ENCODE measurements at regions of chr16 and their contacts with region 1.

Region 1: GRCh38 chr16:4957720-4958509 is at the start of gene SEC14L5:
- DNase-seq: peak; percentile 97
- H3K4me3 Mint-ChIP-seq: peak within 1 kb of the TSS; percentile 88
- H3K27ac Mint-ChIP-seq: peak within 1 kb of the TSS; percentile 62
- H3K4me1 Mint-ChIP-seq: peaks cover 20% of the 10 kb centered on the region
- H3K27me3 Mint-ChIP-seq: peaks cover 31% of the 10 kb centered on the region
- total RNA-seq, gene SEC14L5: not detected in 2 replicates

Region 2: DNA sequence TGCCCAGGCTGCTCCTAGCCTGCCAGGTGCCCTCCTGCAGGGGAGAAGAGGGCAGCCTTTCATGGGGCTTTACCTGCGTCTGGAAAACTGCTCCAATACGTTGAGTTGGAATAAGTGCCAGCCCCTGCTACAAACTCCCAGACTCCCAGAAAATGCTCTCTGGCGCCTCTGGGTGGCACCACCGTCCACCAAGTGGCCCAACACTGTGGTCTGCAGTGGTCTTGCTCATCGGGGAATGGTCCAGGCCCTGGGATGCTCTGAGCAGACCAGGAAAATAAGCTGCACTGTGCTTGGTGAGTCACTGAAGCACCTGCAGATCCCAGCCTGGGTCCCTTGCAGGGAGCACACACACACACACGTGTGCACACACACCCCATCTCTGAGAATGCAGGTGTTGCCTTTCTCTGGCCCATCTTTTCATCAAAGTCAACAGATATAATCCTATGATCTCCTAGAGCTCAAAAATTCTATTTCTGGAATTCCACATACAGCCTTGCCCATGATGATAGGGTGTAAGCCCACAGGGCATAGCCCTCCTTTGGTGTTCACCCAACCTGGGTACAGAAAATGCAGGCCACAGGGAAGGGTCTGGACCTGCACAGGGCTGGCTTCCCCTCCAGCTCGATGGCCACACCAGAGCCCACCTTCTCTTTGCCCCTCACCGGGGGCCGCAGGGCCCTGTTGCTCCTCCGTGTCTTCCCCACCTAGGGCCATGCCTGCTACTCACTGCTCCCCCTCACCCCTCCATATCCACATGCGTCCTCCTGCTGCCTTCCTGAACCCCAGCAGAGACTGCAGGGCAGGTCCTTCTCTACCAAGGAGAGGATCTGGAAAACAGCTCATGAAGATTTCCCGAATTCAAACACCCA is 439.9 kb before region 1 on chr16:
- intact Hi-C with region 1: no loop called
- DNase-seq: no peak
- H3K4me3 Mint-ChIP-seq: no peak overlapping the region
- H3K27ac Mint-ChIP-seq: no peak overlapping the region
- H3K4me1 Mint-ChIP-seq: peaks cover 30% of the 10 kb centered on the region
- H3K27me3 Mint-ChIP-seq: no peaks in the 10 kb centered on the region

Region 3: DNA sequence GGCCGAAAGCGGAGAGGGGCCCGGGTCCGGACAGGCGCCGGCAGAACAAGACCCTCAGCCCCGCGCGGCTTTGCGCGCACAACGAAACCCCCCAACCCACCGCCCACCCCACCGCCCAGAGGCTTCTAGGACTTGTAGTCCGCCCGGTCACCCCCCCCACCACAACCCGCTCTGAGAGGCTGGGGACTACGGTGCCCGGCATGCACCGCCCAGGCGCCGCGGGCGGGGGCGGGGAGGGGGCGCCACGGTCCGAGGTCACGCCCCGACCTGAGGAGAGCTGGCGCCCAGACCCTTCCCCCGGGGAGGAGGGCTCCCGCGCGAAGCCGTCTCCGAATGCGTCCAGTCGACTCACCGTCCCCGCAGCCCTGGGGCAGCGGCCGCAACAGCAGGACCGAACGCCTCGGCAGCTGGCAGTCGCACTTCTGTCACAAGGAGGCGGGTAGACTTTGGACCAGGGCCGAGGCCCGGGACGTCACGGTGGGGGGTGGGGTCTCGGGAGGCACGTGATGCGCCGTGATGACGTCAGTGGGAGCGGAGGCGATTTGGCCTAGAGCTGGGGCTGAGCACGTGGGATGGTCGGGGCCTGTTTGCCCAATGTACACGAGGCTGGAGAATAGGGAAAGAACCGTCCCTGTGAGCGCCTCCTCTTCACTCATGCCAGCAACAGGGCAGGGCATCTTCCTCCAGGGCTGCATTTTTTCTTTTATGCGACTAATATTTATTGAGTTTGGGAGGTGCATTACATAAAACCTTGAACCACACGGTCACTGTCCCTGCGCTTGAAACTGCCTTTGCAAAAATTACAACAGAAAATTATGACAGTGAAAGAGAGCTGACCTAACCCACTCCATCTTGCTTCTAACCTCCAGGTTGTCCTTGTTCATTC is 419.3 kb before region 1 on chr16 and contains the start of gene CDIP1:
- intact Hi-C with region 1: loop called (anchors 10 kb)
- DNase-seq: peak; percentile 97
- H3K4me3 Mint-ChIP-seq: peak within 1 kb of the TSS; percentile 85
- H3K27ac Mint-ChIP-seq: peak within 1 kb of the TSS; percentile 89
- H3K4me1 Mint-ChIP-seq: peaks cover 31% of the 10 kb centered on the region
- H3K27me3 Mint-ChIP-seq: peaks cover 4% of the 10 kb centered on the region
- total RNA-seq, gene CDIP1: 49.4 and 55.2 TPM in 2 replicates

Region 4: GRCh38 chr16:4734063-4734729 is 223.7 kb before region 1 on chr16 and contains the starts of genes ANKS3 and DNAAF8:
- intact Hi-C with region 1: loop called (anchors 2 kb)
- DNase-seq: peak; percentile 96
- H3K4me3 Mint-ChIP-seq: peak within 1 kb of the TSS; percentile 93
- H3K27ac Mint-ChIP-seq: peak within 1 kb of the TSS; percentile 91
- H3K4me1 Mint-ChIP-seq: peaks cover 13% of the 10 kb centered on the region
- H3K27me3 Mint-ChIP-seq: no peaks in the 10 kb centered on the region
- total RNA-seq, gene ANKS3: 21.8 and 22.3 TPM in 2 replicates
- total RNA-seq, gene DNAAF8: not detected in 2 replicates

Region 5: GRCh38 chr16:4766874-4767628 is 190.9 kb before region 1 on chr16 and contains the start of gene ZNF500:
- intact Hi-C with region 1: loop called (anchors 2 kb)
- DNase-seq: peak; percentile 100
- H3K4me3 Mint-ChIP-seq: peak within 1 kb of the TSS; percentile 96
- H3K27ac Mint-ChIP-seq: peak within 1 kb of the TSS; percentile 91
- H3K4me1 Mint-ChIP-seq: peaks cover 26% of the 10 kb centered on the region
- H3K27me3 Mint-ChIP-seq: no peaks in the 10 kb centered on the region
- total RNA-seq, gene ZNF500: 15.0 and 16.1 TPM in 2 replicates

Region 6: GRCh38 chr16:4802659-4803287 is 155.1 kb before region 1 on chr16:
- intact Hi-C with region 1: loop called (anchors 2 kb)
- DNase-seq: peak; percentile 98
- H3K4me3 Mint-ChIP-seq: peak overlapping the region; percentile 83
- H3K27ac Mint-ChIP-seq: no peak overlapping the region
- H3K4me1 Mint-ChIP-seq: peaks cover 7% of the 10 kb centered on the region
- H3K27me3 Mint-ChIP-seq: no peaks in the 10 kb centered on the region

Region 7: GRCh38 chr16:4846891-4847773 is 110.8 kb before region 1 on chr16 and contains the starts of genes GLYR1 and UBN1:
- intact Hi-C with region 1: loop called (anchors 2 kb)
- DNase-seq: peak; percentile 100
- H3K4me3 Mint-ChIP-seq: peak within 1 kb of the TSS; percentile 95
- H3K27ac Mint-ChIP-seq: peak within 1 kb of the TSS; percentile 91
- H3K4me1 Mint-ChIP-seq: peaks cover 39% of the 10 kb centered on the region
- H3K27me3 Mint-ChIP-seq: no peaks in the 10 kb centered on the region
- total RNA-seq, gene GLYR1: 109 and 119 TPM in 2 replicates
- total RNA-seq, gene UBN1: 36.5 and 36.9 TPM in 2 replicates

Region 8: GRCh38 chr16:5033256-5034169 is 75.6 kb after region 1 on chr16 and contains the start of gene NAGPA:
- intact Hi-C with region 1: loop called (anchors 1 kb)
- DNase-seq: peak; percentile 95
- H3K4me3 Mint-ChIP-seq: peak within 1 kb of the TSS; percentile 89
- H3K27ac Mint-ChIP-seq: peak within 1 kb of the TSS; percentile 84
- H3K4me1 Mint-ChIP-seq: peaks cover 10% of the 10 kb centered on the region
- H3K27me3 Mint-ChIP-seq: no peaks in the 10 kb centered on the region
- total RNA-seq, gene NAGPA: 10.6 and 11.4 TPM in 2 replicates

Measured in activated CD4-positive, alpha-beta T cell treated with anti-CD3 and anti-CD28 coated beads, Interleukin-2, amount 10 ng/mL, durations not matched to agents 24 days and 14 days (primary cell).